Activated B cell treated with CpG ODN at 0.5 μM for 24 hours (primary cell): ENCODE measurements at regions of chr7 and their contacts with region 1.

Region 1: DNA sequence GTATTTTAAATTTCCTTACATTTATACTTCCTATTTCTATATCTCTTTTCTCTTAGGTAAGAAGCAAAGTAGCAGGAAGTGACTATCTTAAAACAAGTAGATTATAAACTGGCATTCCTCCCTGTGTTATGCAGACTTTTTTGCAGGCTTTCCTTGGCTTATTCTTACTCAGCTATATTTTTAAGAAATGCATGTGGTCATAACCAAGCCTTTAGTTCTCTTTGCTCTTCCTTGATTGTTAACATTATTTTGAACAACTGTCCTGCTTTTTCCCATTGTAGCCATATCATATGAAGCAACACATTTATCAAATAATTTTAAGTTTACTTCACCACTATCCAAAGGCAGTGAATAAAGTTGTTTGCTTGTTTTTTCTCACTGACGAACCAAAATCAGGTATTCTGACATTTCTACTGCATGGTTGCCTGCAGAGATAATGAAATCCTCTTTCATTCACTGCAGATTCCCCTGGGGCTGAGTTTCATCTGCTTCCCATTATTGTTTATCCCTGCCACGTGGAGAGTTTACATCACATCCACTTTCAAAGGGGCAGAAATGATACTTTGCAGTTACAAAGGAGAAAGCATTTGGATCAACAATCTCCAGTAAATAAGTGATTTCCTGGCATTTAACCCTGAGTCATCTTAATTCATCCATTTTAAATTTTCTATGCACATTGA is 389.9 kb upstream of the SEMA3C start:
- DNase-seq: no peak
- ATAC-seq: no peak
- H3K4me3 Mint-ChIP-seq: no peak overlapping the region
- H3K27ac Mint-ChIP-seq: no peak overlapping the region
- H3K4me1 Mint-ChIP-seq: no peaks in the 10 kb centered on the region
- H3K27me3 Mint-ChIP-seq: no peaks in the 10 kb centered on the region
- CTCF ChIP-seq: no peak

Region 2: GRCh38 chr7:81349044-81349443 is 40.3 kb after region 1 on chr7:
- CTCF ChIA-PET with region 1: no interaction called
- POLR2A ChIA-PET with region 1: no interaction called
- intact Hi-C with region 1: loop called (anchors 1 kb)
- DNase-seq: no peak
- ATAC-seq: no peak
- H3K4me3 Mint-ChIP-seq: no peak overlapping the region
- H3K27ac Mint-ChIP-seq: no peak overlapping the region
- H3K4me1 Mint-ChIP-seq: no peaks in the 10 kb centered on the region
- H3K27me3 Mint-ChIP-seq: no peaks in the 10 kb centered on the region
- CTCF ChIP-seq: no peak

Region 3: DNA sequence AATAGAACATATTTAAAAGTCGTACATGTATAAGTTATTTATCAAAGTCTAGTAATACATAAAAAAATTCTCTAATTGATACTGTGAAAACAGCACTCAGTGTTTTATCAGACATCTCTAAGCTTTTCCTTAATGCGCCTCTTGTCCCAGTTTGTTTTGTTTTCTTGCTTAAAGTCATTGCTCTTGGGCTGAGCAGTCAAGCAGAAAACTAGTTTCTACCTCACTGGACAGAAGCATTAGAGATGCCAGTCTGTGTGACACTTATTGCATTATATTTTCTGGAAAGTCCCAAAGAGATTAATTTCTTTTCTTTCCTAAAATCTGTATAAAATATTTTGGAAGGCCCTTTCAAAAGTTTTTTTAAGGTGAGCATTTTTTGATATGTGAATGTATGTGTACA is 1617.7 kb after region 1 on chr7:
- CTCF ChIA-PET with region 1: no interaction called
- POLR2A ChIA-PET with region 1: no interaction called
- intact Hi-C with region 1: no loop called
- DNase-seq: no peak
- ATAC-seq: no peak
- H3K4me3 Mint-ChIP-seq: no peak overlapping the region
- H3K27ac Mint-ChIP-seq: no peak overlapping the region
- H3K4me1 Mint-ChIP-seq: peaks cover 5% of the 10 kb centered on the region
- H3K27me3 Mint-ChIP-seq: no peaks in the 10 kb centered on the region
- CTCF ChIP-seq: no peak